ENCODE measurements at regions of chr14 and their contacts with region 1.

Region 1: DNA sequence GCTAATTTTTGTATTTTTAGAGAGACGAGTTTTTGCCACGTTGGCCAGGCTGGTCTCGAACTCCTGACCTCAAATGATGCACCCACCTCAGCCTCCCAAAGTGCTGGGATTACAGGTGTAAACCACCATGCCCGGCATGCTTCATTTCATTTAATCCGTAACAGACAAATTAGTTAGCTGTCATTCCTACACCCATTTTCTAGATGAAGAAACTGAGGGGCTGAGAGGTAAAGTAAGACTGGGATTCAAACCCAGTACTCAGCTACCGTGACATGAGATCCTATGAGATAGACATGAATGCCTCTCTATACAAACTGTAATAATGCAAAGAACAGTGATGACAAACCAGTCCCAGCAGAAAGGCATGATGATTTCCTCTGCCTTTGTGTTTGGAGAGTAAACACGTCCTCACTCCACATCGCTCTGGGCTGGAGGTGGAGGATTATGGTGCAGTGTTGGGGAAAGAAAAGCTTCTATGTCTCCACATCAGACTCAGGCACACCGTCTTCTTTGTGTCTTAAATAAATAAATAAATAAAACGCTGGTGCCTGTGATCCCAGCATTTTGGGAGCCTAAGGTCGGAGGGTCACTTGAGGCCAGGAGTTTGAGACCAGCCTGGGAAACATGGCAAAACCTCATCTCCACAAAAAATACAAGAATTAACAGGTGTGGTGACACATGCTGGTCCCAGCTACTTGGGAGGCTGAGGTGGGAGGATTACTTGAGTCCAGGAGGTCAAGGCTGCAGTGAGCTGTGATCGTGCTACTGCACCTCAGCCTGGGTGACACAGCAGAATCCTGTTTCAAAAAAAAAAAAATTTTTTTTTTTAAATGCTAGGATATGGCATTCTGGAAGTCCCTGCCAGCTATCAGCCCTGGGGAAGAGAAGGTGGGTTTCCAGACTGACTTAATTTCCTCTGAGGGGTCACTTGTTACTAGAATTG is 10.5 kb downstream of the VSX2 start:
- DNase-seq: no peak
- H3K4me3 ChIP-seq: no peak overlapping the region
- H3K27ac ChIP-seq: no peak overlapping the region
- H3K4me1 ChIP-seq: no peaks in the 10 kb centered on the region
- H3K27me3 ChIP-seq: peaks cover 48% of the 10 kb centered on the region
- CTCF ChIP-seq: no peak
- EP300 ChIP-seq: no peak
- RAD21 ChIP-seq: no peak

Region 2: DNA sequence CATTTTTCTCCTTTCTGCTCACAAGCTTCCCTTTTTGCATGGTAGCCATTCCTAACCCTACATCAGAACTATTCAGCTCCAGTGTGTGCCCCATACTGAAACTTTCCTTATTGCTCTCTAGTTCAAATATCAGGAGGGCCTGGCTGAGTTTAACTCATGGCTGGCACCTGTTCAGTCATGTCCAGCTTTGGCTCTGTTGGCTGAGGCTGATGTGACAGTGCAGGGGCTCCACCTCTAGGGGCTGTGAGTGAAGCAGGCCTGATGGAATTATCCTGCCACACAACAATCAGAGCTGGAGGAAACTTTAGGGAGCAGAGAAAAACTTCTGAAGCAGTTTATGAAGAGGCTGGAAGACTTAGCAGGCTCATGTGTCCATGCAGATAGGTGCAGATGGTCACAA is 291.1 kb before region 1 on chr14:
- CTCF ChIA-PET with region 1: no interaction called
- POLR2A ChIA-PET with region 1: no interaction called
- DNase-seq: no peak
- H3K4me3 ChIP-seq: no peak overlapping the region
- H3K27ac ChIP-seq: no peak overlapping the region
- H3K4me1 ChIP-seq: no peaks in the 10 kb centered on the region
- H3K27me3 ChIP-seq: no peaks in the 10 kb centered on the region
- CTCF ChIP-seq: no peak
- EP300 ChIP-seq: no peak
- RAD21 ChIP-seq: no peak

Region 3: DNA sequence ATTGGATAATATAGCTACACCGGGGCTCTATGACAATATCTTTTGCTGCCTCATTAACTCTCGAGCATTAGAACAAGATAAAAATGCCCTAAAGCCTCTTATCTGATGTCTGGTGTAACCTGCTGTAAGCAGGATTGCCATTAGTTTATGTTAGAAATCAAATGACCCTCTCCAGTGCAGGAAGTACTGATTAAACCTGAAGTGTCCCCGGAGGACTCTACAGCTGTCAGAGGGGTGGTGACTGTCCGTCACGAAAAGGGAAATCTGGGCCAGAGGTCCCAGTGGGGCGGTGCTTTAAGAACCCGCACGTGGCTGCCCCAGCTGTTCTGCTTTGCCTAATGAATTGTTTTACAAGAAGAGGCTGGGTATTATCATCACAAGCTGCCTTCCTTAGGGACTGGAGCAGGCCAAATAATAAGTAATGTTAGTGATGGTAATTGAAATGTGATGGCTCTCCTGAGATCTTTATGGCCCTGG is 109.3 kb before region 1 on chr14:
- CTCF ChIA-PET with region 1: interaction called, 28 read pairs
- POLR2A ChIA-PET with region 1: no interaction called
- DNase-seq: peak; percentile 60
- H3K4me3 ChIP-seq: no peak overlapping the region
- H3K27ac ChIP-seq: no peak overlapping the region
- H3K4me1 ChIP-seq: peaks cover 0 to 8% of the 10 kb centered on the region in 2 experiments; a peak in 2 of 4 replicates
- H3K27me3 ChIP-seq: no peaks in the 10 kb centered on the region
- CTCF ChIP-seq: no peak
- EP300 ChIP-seq: peak in 1 of 2 experiments; percentile 80; a peak in 2 of 4 replicates
- RAD21 ChIP-seq: no peak

Region 4: DNA sequence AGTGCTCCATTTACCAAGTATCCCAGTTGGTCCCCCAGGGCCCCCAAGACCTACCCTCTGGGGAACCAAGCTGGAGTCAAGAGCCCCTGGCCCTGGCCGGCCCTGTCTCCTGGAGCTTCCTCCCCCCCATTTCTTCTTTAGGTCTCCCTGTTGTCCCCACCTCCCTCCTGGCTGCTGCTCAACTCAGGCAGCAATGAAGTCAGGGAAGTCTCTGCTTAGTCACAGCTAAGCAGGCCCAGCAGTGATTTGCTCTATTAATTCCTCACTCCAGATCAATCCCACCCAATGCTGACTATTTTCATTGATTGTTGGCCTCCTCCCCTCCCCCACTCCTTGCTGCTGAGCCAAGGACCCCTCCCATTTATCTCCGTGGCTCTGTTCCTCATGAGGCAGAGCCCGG is 17.9 kb after region 1 on chr14:
- CTCF ChIA-PET with region 1: interaction called, 17 read pairs
- POLR2A ChIA-PET with region 1: no interaction called
- DNase-seq: no peak
- H3K4me3 ChIP-seq: no peak overlapping the region
- H3K27ac ChIP-seq: no peak overlapping the region
- H3K4me1 ChIP-seq: no peaks in the 10 kb centered on the region; a peak in 1 of 4 replicates
- H3K27me3 ChIP-seq: no peaks in the 10 kb centered on the region
- CTCF ChIP-seq: no peak
- EP300 ChIP-seq: no peak
- RAD21 ChIP-seq: no peak

Measured in SK-N-SH (cell line).